ENCODE measurements at regions of chr2 and their contacts with region 1.

Region 1: GRCh38 chr2:230924470-230925341 is at the start of gene GPR55:
- DNase-seq: peak; percentile 83
- H3K4me3 Mint-ChIP-seq: peak within 1 kb of the TSS; percentile 60
- H3K27ac Mint-ChIP-seq: peak within 1 kb of the TSS; percentile 91
- H3K4me1 Mint-ChIP-seq: peaks cover 63% of the 10 kb centered on the region
- H3K27me3 Mint-ChIP-seq: peaks cover 2% of the 10 kb centered on the region
- total RNA-seq, gene GPR55: 0.35 to 0.43 TPM

Region 2: DNA sequence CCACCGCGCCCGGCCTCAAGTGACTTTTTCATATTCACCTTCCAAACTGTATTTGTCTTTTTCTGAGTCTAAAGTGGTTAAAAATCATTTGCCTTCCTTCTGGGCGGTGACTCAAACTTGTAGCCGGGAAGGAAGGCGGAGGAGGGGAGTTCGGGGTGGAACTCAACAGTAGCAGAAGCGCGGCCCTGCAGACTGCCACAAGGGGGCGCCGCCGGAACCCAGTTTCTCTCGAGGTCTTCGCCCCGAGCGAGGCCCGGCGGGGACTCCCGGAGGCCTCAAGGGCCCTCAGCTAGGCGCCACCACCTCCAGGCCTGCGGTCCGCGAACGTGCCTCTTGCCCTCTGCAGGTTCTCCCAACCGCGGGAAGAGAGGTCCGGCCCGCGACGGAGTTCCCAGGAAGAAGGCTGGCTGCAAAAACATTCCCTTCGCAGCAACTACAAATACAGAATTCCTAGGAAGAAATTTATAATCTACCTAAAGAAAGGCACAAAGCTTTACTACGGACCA is 76.8 kb before region 1 on chr2:
- CTCF ChIA-PET with region 1: no interaction called
- intact Hi-C with region 1: loop called (anchors 1 kb)
- DNase-seq: peak; percentile 97
- H3K4me3 Mint-ChIP-seq: no peak overlapping the region
- H3K27ac Mint-ChIP-seq: peak overlapping the region; percentile 31
- H3K4me1 Mint-ChIP-seq: peaks cover 14% of the 10 kb centered on the region
- H3K27me3 Mint-ChIP-seq: peaks cover 13% of the 10 kb centered on the region

Region 3: GRCh38 chr2:230864598-230865306 is 60.0 kb before region 1 on chr2 and contains the start of gene ITM2C:
- CTCF ChIA-PET with region 1: interaction called, 4 read pairs
- intact Hi-C with region 1: loop called (anchors 1 kb)
- DNase-seq: peak; percentile 84
- H3K4me3 Mint-ChIP-seq: peak within 1 kb of the TSS; percentile 82
- H3K27ac Mint-ChIP-seq: peak within 1 kb of the TSS; percentile 3
- H3K4me1 Mint-ChIP-seq: peaks cover 45% of the 10 kb centered on the region
- H3K27me3 Mint-ChIP-seq: peaks cover 4% of the 10 kb centered on the region
- total RNA-seq, gene ITM2C: 13.0 to 13.6 TPM

Region 4: GRCh38 chr2:230942920-230943896 is 18.5 kb after region 1 on chr2:
- CTCF ChIA-PET with region 1: interaction called, 3 read pairs
- intact Hi-C with region 1: loop called (anchors 1 kb)
- DNase-seq: peak; percentile 58
- H3K4me3 Mint-ChIP-seq: no peak overlapping the region
- H3K27ac Mint-ChIP-seq: peak overlapping the region; percentile 44
- H3K4me1 Mint-ChIP-seq: peaks cover 11% of the 10 kb centered on the region
- H3K27me3 Mint-ChIP-seq: peaks cover 2% of the 10 kb centered on the region

Region 5: DNA sequence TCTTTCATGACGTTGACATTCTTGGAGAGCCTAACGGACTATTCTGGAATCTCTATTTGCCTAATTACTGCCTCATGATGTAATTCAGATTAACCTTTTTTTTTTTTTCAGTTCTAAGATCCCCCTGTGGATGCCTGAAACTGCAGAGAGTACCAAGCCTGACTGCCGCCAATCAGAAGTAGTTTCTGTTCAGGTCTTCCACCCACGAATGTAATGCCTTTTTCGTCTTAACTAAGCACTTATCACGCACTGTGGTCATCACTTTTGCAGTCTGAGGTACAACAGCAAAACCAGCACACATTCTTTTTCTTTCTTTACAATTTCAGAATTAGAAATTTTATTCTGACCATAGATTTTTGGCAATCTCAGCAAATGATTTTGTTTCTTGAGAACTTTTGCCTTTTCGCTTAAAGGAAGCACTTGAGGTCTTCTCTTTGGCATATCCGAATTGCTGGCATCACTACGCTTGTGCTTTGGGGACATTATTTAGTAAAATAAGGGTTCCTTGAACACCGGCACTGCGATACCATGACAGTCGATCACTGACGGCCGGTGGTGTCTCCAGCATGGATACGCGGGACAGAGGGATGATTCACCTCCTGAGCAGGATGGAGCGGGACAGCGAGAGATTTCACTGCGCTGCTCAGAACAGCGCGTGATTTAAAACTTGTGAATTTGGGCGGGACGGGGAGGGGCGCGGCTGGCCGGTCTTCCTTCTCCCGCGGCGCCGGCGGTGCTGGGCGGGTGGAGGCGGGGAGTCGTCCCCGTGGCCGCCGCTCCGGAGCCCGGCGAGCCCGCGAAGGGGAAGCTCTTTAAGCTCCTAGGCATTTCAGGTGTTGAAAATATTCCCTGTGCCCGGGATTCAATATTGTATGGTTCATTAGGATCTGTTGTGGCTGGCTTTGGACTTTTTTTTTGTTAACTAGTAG is 32.4 kb after region 1 on chr2:
- CTCF ChIA-PET with region 1: no interaction called
- intact Hi-C with region 1: loop called (anchors 1 kb)
- DNase-seq: peak; percentile 48
- H3K4me3 Mint-ChIP-seq: peak overlapping the region; percentile 67
- H3K27ac Mint-ChIP-seq: peak overlapping the region; percentile 48
- H3K4me1 Mint-ChIP-seq: peaks cover 22% of the 10 kb centered on the region
- H3K27me3 Mint-ChIP-seq: peaks cover 50% of the 10 kb centered on the region

Region 6: GRCh38 chr2:230974096-230974913 is 49.6 kb after region 1 on chr2:
- CTCF ChIA-PET with region 1: interaction called, 3 read pairs
- intact Hi-C with region 1: loop called (anchors 1 kb)
- DNase-seq: peak; percentile 87
- H3K4me3 Mint-ChIP-seq: no peak overlapping the region
- H3K27ac Mint-ChIP-seq: peak overlapping the region; percentile 73
- H3K4me1 Mint-ChIP-seq: peaks cover 21% of the 10 kb centered on the region
- H3K27me3 Mint-ChIP-seq: peaks cover 5% of the 10 kb centered on the region

Region 7: DNA sequence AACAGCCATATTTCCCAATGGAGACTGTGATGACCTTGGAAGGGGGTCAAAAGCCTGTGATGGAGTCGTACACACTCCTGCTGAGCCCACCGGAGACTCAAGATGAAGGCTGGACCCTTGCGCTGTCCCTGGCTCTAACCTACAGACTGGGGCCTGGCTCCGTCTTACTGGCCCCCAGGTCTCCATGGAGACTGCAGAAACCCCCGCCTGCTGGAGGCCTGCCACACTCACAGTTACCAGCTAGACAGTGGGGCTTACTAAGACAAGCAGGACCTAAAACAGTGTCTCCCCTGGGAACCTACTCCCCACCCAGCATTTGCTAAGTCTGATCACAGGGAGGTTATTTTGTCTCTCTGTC is 122.2 kb after region 1 on chr2:
- CTCF ChIA-PET with region 1: no interaction called
- intact Hi-C with region 1: no loop called
- DNase-seq: no peak
- H3K4me3 Mint-ChIP-seq: no peak overlapping the region
- H3K27ac Mint-ChIP-seq: no peak overlapping the region
- H3K4me1 Mint-ChIP-seq: no peaks in the 10 kb centered on the region
- H3K27me3 Mint-ChIP-seq: peaks cover 1% of the 10 kb centered on the region

Measured in activated naive CD4-positive, alpha-beta T cell treated with anti-CD3 and anti-CD28 coated beads for 36 hours (primary cell).